Sciatic nerve (tissue), 2 donors: ENCODE measurements at regions of chr5 and their contacts with region 1.

Region 1: GRCh38 chr5:5721891-5722290 is 299.4 kb downstream of the ICE1 start:
- DNase-seq: no peak
- ATAC-seq: no peak

Region 2: DNA sequence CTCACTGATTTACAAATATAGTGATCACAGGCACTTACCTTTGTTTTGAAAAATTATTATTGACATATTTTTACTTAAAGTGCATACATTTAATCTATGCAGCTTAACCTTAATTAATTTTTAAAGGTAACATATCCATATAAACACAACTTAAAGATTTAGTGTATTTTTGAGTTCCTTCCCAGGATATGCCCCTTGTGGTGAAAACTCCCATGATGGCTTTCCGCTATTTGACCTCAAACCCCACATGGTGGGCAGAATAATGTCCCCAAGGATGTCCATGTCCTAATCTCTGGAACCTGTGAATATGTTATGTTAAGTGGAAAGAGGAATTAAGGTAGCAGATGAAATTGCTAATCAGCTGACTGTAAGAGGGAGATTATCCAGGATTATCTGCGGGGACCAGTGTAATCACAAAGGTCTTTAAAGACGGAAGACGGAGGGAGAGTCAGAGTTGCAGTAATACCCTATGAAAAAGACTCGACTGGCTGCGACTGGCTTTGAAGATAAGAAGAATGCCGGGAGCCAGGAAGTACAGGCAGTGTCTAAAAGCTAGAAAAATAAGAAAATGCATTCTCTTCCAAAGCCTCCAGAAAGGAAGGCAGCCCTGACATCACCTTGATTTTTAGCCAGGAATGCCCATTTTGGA is 105.5 kb before region 1 on chr5:
- intact Hi-C with region 1: no loop called
- DNase-seq: no peak
- ATAC-seq: no peak

Region 3: GRCh38 chr5:5738797-5739489 is 17.1 kb after region 1 on chr5:
- intact Hi-C with region 1: loop called (anchors 1 kb)
- DNase-seq: no peak
- ATAC-seq: no peak